Naive thymus-derived CD4-positive, alpha-beta T cell (primary cell): ENCODE measurements at regions of chr11 and their contacts with region 1.

Region 1: DNA sequence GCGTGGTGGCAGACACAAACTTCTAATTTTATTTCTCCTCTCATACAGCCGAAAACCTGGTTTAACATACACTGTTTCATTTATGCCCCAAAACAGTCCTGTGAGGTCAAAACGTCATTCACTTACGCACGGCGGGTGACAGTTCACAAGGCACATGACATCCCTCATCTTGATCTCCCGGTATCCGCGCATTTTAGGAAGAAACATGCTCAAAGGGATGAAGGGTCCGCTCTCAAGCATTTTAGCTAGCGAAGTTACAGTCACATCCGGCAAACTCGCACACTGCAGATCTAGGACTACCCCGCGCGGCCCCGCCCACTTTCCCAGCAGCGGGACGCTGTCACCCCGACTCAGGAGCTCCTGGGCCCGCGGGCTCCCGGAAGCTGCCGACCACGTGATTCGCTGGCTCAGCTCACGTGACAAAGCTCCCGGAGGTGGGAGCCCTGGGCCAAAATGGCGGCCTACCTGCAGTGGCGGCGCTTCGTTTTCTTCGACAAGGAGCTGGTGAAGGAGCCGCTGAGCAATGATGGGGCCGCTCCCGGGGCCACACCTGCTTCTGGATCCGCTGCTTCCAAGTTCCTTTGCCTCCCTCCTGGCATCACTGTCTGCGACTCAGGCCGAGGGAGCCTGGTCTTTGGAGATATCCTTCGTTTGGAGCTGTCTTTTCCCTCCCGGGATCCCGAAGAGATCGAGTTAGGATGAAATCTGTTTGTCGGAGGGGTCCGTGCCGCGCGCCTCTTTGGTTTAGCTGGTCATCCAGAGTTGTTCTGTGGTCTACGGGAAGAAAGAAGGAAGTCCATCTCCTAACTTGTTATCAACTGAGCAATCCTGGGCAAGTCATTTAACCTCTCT is at the start of gene VPS11:
- DNase-seq: peak; percentile 81 to 98 (median 97)
- ATAC-seq: peak; percentile 93
- H3K4me3 ChIP-seq: peak within 1 kb of the TSS; percentile 93
- H3K4me3 Mint-ChIP-seq: peak within 1 kb of the TSS; percentile 90 to 100 (median 95)
- H3K27ac ChIP-seq: peak within 1 kb of the TSS; percentile 96
- H3K27ac Mint-ChIP-seq: peak within 1 kb of the TSS; percentile 92 to 100 (median 97)
- H3K4me1 ChIP-seq: peaks cover 18 to 23% of the 10 kb centered on the region in 2 donors
- H3K4me1 Mint-ChIP-seq: peaks cover 26 to 59% (median 47%) of the 10 kb centered on the region in 7 donors
- H3K27me3 ChIP-seq: no peaks in the 10 kb centered on the region
- H3K27me3 Mint-ChIP-seq: no peaks in the 10 kb centered on the region
- total RNA-seq, gene VPS11: 39.0 to 73.9 (median 57.1) TPM

Region 2: GRCh38 chr11:118997627-118998387 is 69.8 kb before region 1 on chr11 and contains the start of gene CENATAC:
- CTCF ChIA-PET with region 1: no interaction called
- POLR2A ChIA-PET with region 1: interaction called, 5 read pairs
- intact Hi-C with region 1: loop called in 1 of 2 experiments (anchors 2 kb)
- DNase-seq: peak; percentile 91 to 98 (median 94)
- ATAC-seq: peak; percentile 98
- H3K4me3 ChIP-seq: peak within 1 kb of the TSS; percentile 91
- H3K4me3 Mint-ChIP-seq: peak within 1 kb of the TSS; percentile 87 to 99 (median 94)
- H3K27ac ChIP-seq: peak within 1 kb of the TSS; percentile 85
- H3K27ac Mint-ChIP-seq: peak within 1 kb of the TSS; percentile 87 to 98 (median 92)
- H3K4me1 ChIP-seq: peaks cover 6 to 16% of the 10 kb centered on the region in 2 donors
- H3K4me1 Mint-ChIP-seq: peaks cover 26 to 45% (median 37%) of the 10 kb centered on the region in 7 donors
- H3K27me3 ChIP-seq: no peaks in the 10 kb centered on the region
- H3K27me3 Mint-ChIP-seq: no peaks in the 10 kb centered on the region
- total RNA-seq, gene CENATAC: 53.5 to 136 (median 109) TPM

Region 3: DNA sequence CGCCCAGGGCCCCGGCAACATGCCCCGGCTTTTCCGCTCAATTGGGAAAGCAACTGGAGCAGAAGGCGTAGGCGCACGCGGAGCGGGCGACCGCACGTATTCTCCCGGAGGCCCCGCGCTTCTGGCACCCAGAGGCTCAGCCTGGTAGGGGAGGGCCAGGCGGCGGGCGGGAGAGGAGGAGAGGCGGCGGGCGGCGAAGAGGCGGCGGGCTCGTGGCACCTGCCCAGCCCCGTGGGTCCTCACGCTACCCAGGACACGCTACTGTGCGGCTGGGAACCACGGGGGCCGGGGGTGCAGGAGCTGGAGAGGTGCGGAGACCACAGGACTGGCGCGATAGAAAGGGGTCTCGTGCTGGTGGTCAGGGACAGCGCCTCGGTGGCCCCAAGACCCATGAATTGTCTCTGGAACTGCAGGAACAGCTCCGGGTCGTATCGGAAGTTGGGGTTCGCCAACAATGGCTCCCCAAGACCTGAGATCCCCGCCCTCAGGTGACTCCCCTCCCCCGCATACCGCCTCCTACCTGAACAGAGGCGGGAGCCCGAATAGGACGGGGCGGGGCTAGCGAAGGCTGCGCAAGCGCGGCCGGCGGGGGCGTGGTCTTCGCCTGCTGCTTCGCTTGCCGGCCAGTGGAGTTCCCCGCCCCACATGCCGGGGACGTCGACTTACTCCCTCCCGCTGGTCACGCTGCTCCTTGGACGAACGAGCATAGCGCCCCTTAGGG is 37.1 kb before region 1 on chr11 and contains the start of gene SLC37A4:
- CTCF ChIA-PET with region 1: no interaction called
- POLR2A ChIA-PET with region 1: interaction called, 11 read pairs
- intact Hi-C with region 1: loop called (anchors 1 to 2 kb)
- DNase-seq: peak; percentile 96 to 100 (median 98)
- ATAC-seq: peak; percentile 97
- H3K4me3 ChIP-seq: peak within 1 kb of the TSS; percentile 91
- H3K4me3 Mint-ChIP-seq: peak within 1 kb of the TSS; percentile 62 to 93 (median 82)
- H3K27ac ChIP-seq: peak within 1 kb of the TSS; percentile 79
- H3K27ac Mint-ChIP-seq: peak within 1 kb of the TSS; percentile 59 to 93 (median 81)
- H3K4me1 ChIP-seq: peaks cover 0 to 10% of the 10 kb centered on the region in 2 donors
- H3K4me1 Mint-ChIP-seq: peaks cover 12 to 24% (median 17%) of the 10 kb centered on the region in 7 donors
- H3K27me3 ChIP-seq: no peaks in the 10 kb centered on the region
- H3K27me3 Mint-ChIP-seq: no peaks in the 10 kb centered on the region
- total RNA-seq, gene SLC37A4: 7.1 to 20.8 (median 14.6) TPM

Region 4: GRCh38 chr11:119084663-119085436 is 17.3 kb after region 1 on chr11 and contains the start of gene HMBS:
- CTCF ChIA-PET with region 1: interaction called, 3 read pairs
- POLR2A ChIA-PET with region 1: interaction called, 33 read pairs
- intact Hi-C with region 1: loop called (anchors 1 kb)
- DNase-seq: peak; percentile 83 to 93 (median 87)
- ATAC-seq: peak; percentile 97
- H3K4me3 ChIP-seq: peak within 1 kb of the TSS; percentile 81
- H3K4me3 Mint-ChIP-seq: peak within 1 kb of the TSS; percentile 85 to 98 (median 94)
- H3K27ac ChIP-seq: peak within 1 kb of the TSS; percentile 81
- H3K27ac Mint-ChIP-seq: peak within 1 kb of the TSS; percentile 87 to 97 (median 93)
- H3K4me1 ChIP-seq: peaks cover 8 to 9% of the 10 kb centered on the region in 2 donors
- H3K4me1 Mint-ChIP-seq: peaks cover 7 to 39% (median 17%) of the 10 kb centered on the region in 7 donors
- H3K27me3 ChIP-seq: no peaks in the 10 kb centered on the region
- H3K27me3 Mint-ChIP-seq: no peaks in the 10 kb centered on the region
- total RNA-seq, gene HMBS: 6.7 to 25.4 (median 7.7) TPM

Region 5: DNA sequence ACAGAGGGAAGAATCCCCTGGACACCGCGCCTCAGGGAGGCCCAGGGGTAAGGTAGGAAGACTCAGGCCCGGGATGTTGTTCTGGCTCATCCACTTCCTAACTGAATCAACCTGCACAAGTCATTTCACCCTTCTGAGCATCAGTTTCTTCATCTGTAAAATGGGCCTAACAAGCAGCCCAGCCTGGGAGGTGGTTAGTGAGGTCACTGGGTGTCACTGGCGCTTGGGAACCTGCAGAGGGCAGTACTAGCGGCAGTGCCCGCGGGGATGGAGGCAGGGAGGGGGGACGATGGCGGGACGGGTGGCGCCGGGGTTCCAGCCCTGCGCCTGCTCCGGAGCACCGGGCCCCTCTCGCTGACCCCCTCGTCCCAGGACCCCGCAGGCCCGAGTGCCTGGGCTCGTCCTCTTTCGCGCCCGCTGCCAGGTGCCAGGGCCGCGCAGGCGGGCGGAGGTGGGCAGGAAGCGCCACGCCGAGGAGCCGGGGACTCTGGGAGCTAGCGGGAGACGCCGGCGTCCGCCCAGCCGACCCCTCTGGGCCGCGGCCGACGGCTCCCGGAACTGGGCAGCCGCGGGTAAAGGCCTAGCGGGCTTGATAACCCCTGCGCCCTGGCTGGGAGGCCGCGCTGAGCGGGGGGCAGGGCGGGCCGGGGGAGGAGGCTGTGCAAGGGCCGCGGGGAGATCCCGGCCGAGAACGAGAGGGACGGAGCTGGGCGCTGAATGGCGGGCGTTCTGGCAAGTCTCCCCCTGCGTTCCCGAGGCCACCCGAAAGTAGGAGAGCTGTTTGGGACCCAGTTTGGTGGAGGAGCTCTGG is 101.1 kb after region 1 on chr11 and contains the start of gene NLRX1:
- CTCF ChIA-PET with region 1: interaction called, 3 read pairs
- POLR2A ChIA-PET with region 1: interaction called, 5 read pairs
- intact Hi-C with region 1: loop called in 1 of 2 experiments (anchors 1 kb)
- DNase-seq: peak; percentile 67 to 85 (median 82)
- ATAC-seq: peak; percentile 98
- H3K4me3 ChIP-seq: peak within 1 kb of the TSS; percentile 75
- H3K4me3 Mint-ChIP-seq: peak within 1 kb of the TSS; percentile 86 to 94 (median 90)
- H3K27ac ChIP-seq: peak within 1 kb of the TSS; percentile 73
- H3K27ac Mint-ChIP-seq: peak within 1 kb of the TSS; percentile 64 to 95 (median 87)
- H3K4me1 ChIP-seq: peaks cover 0 to 4% of the 10 kb centered on the region in 2 donors
- H3K4me1 Mint-ChIP-seq: peaks cover 4 to 25% (median 11%) of the 10 kb centered on the region in 7 donors
- H3K27me3 ChIP-seq: no peaks in the 10 kb centered on the region
- H3K27me3 Mint-ChIP-seq: no peaks in the 10 kb centered on the region
- total RNA-seq, gene NLRX1: 8.3 to 19.5 (median 9.8) TPM

Region 6: GRCh38 chr11:119284344-119285157 is 217.0 kb after region 1 on chr11:
- CTCF ChIA-PET with region 1: no interaction called
- POLR2A ChIA-PET with region 1: no interaction called
- intact Hi-C with region 1: loop called in 1 of 2 experiments (anchors 1 kb)
- DNase-seq: peak in 7 of 9 donors; percentile 56 to 76 (median 68)
- ATAC-seq: peak; percentile 94
- H3K4me3 ChIP-seq: no peak overlapping the region
- H3K4me3 Mint-ChIP-seq: peak overlapping the region in 2 of 10 donors; percentile 23 to 51
- H3K27ac ChIP-seq: no peak overlapping the region
- H3K27ac Mint-ChIP-seq: peak overlapping the region; percentile 24 to 91 (median 55)
- H3K4me1 ChIP-seq: peaks cover 0 to 6% of the 10 kb centered on the region in 2 donors
- H3K4me1 Mint-ChIP-seq: peaks cover 17 to 56% (median 41%) of the 10 kb centered on the region in 7 donors
- H3K27me3 ChIP-seq: no peaks in the 10 kb centered on the region
- H3K27me3 Mint-ChIP-seq: no peaks in the 10 kb centered on the region

Region 7: DNA sequence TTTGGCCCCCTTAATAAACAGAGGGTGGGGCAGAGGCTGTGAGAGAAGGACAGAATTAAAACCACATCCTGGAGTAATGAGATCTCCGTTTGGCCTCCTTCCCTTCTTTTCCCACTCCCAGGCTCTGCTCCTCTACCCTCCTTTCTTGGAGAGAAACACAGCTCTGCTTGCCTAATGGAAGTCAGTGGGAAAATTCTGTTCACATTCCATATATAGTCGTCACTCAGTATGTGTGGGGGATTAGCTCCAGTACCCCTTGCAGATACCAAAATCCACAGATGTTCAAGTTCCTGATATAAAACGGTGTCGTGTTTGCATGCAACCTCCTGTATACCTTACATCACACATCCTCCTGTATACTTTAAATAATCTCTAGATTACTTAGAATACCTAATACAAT is 393.0 kb after region 1 on chr11:
- CTCF ChIA-PET with region 1: no interaction called
- POLR2A ChIA-PET with region 1: no interaction called
- intact Hi-C with region 1: no loop called
- DNase-seq: no peak
- ATAC-seq: no peak
- H3K4me3 ChIP-seq: no peak overlapping the region
- H3K4me3 Mint-ChIP-seq: no peak overlapping the region
- H3K27ac ChIP-seq: no peak overlapping the region
- H3K27ac Mint-ChIP-seq: no peak overlapping the region
- H3K4me1 ChIP-seq: no peaks in the 10 kb centered on the region
- H3K4me1 Mint-ChIP-seq: no peaks in the 10 kb centered on the region
- H3K27me3 ChIP-seq: no peaks in the 10 kb centered on the region
- H3K27me3 Mint-ChIP-seq: peaks cover 15 to 40% (median 29%) of the 10 kb centered on the region in 5 donors